Left lung (tissue), 14 donors: ENCODE measurements at regions of chr7 and their contacts with region 1.

Region 1: GRCh38 chr7:38756521-38756920 is 125.3 kb upstream of the AMPH start:
- DNase-seq: no peak
- ATAC-seq: no peak
- H3K4me3 ChIP-seq: no peak overlapping the region
- H3K27ac ChIP-seq: no peak overlapping the region
- H3K4me1 ChIP-seq: no peaks in the 10 kb centered on the region
- H3K27me3 ChIP-seq: no peaks in the 10 kb centered on the region
- CTCF ChIP-seq: no peak

Region 2: DNA sequence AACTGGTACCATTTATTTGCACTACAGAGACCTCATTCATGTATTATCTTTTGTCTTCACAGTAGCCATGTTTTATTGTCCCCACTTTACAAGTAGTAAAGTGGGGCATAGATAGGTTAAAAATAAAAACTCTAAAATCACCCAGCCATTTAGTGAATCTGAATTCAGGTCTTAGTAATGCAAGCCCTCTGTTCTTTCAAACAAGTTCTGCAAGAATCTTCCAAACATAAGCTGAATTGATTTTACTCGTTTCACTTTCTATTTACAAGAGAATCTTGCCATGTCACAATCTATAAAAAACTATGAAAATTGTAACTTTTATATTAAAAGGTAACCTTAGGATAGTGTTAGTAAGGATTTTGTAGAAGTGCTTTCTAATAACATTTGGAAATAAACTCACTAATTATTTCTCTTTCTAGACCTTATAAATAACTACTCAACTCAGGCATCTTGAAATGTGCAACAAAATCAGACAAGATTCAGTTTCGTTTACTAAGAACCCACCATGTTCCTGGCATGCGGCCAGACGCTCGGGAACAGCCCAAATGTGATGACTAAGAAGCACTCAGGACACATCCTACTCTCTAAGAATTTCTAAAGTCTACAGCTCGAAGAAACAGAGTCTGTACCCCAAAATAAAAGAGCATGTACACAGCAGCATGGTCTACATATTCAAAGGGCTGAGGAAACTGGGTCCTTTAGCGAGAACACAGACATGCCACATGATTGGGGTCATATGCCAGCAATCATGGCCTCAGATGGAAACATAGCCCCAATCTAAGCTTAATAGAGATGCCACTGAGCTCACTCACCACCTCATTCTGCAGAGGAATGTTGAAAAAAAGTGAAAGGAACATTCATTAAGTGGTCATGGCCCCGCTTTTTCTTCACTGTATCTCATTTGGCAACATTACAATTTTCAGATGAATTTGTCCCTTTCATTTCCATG is 293.0 kb before region 1 on chr7:
- intact Hi-C with region 1: loop called in 1 of 2 experiments (anchors 5 kb)
- DNase-seq: peak; percentile 38 to 75 (median 52)
- ATAC-seq: no peak
- H3K4me3 ChIP-seq: no peak overlapping the region
- H3K27ac ChIP-seq: no peak overlapping the region
- H3K4me1 ChIP-seq: no peaks in the 10 kb centered on the region
- H3K27me3 ChIP-seq: no peaks in the 10 kb centered on the region
- CTCF ChIP-seq: no peak

Region 3: DNA sequence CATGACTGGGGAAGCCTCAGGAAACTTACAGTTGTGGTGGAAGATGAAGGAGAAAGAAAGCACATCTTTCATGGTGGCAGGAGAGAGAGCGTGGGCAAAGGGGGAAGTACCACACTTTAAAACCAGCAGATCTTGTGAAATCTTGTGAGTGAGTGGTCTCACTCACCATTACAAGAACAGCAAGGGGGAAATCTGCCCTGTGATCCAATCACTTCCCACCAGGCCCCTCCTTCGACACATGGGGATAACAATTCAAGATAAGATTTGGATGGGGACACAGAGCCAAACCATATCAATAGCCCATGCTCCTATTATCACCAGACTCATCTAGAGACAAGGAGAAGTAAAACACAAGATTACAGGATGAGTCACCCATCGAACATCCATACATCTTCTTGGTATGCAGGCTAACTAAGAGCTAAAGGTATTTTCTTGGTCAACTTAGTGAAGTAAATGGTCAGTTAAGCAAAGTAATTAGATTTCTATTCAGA is 754.4 kb after region 1 on chr7:
- intact Hi-C with region 1: no loop called
- DNase-seq: no peak
- ATAC-seq: no peak
- H3K4me3 ChIP-seq: no peak overlapping the region
- H3K27ac ChIP-seq: no peak overlapping the region
- H3K4me1 ChIP-seq: peaks cover 0 to 5% of the 10 kb centered on the region in 2 donors
- H3K27me3 ChIP-seq: no peaks in the 10 kb centered on the region
- CTCF ChIP-seq: no peak